ENCODE measurements at regions of chr20 and their contacts with region 1.

Region 1: DNA sequence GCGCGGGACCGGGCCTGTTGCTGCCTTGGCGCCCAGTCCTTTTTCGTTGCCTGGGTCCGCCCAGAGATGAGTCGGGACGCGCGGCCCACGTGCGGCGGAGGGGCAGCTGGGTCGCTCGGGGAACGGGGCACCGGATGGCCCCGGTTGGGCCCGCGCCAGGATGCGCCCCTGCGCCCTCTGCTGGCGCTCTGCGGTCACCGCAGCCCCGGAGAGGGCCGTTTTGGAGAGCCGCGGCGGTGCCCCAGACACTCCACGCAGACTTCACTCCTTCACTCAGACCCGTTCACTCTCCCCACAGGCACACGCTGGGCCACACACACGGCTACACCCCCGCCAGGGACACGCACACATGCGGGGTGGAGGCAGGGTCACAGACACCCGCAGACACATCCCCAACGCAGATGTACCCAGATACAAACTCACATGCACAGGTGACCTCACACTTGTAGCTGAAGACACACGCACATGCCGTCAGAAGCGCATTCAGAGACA is 38.8 kb downstream of the SRC start:
- DNase-seq: peak; percentile 85
- ATAC-seq: peak; percentile 71
- H3K4me3 ChIP-seq: peak overlapping the region in 4 of 5 experiments; percentile 49 to 65 (median 57)
- H3K4me3 Mint-ChIP-seq: peak overlapping the region; percentile 92
- H3K27ac ChIP-seq: peak overlapping the region in 1 of 2 donors; percentile 59
- H3K27ac Mint-ChIP-seq: peak overlapping the region; percentile 90
- H3K4me1 ChIP-seq: peaks cover 10 to 42% of the 10 kb centered on the region in 2 donors
- H3K4me1 Mint-ChIP-seq: peaks cover 39% of the 10 kb centered on the region
- H3K27me3 ChIP-seq: no peaks in the 10 kb centered on the region
- H3K27me3 Mint-ChIP-seq: no peaks in the 10 kb centered on the region
- CTCF ChIP-seq: peak; percentile 90

Region 2: GRCh38 chr20:37192137-37192854 is 192.4 kb before region 1 on chr20:
- CTCF ChIA-PET with region 1: interaction called, 17 read pairs
- POLR2A ChIA-PET with region 1: no interaction called
- intact Hi-C with region 1: loop called (anchors 2 kb)
- DNase-seq: peak; percentile 75
- ATAC-seq: peak; percentile 82
- H3K4me3 ChIP-seq: no peak overlapping the region
- H3K4me3 Mint-ChIP-seq: no peak overlapping the region
- H3K27ac ChIP-seq: no peak overlapping the region
- H3K27ac Mint-ChIP-seq: no peak overlapping the region
- H3K4me1 ChIP-seq: peaks cover 18 to 37% of the 10 kb centered on the region in 2 donors
- H3K4me1 Mint-ChIP-seq: peaks cover 50% of the 10 kb centered on the region
- H3K27me3 ChIP-seq: no peaks in the 10 kb centered on the region
- H3K27me3 Mint-ChIP-seq: no peaks in the 10 kb centered on the region
- CTCF ChIP-seq: peak; percentile 97

Region 3: DNA sequence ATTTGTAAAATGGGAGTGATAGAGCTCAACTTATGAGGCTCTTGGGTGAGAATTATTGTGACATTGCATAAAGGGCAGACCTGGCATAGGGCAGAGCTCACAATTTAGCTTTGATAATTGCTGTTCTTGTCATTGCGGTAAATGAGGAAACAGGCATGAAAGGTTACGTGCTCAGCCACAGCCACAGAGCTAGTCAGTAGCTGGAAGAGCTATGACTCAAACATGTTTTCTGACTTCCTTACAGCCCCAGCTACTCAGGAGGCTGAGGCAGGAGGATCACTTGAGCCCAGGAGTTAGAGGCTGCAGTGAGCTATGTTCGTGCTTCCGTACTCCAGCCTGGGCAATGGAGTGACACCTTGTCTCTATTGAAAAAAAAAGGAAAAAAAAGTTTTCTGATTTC is 119.6 kb before region 1 on chr20:
- CTCF ChIA-PET with region 1: interaction called, 67 read pairs
- POLR2A ChIA-PET with region 1: interaction called, 3 read pairs
- intact Hi-C with region 1: loop called (anchors 1 kb)
- DNase-seq: peak; percentile 54
- ATAC-seq: peak; percentile 75
- H3K4me3 ChIP-seq: no peak overlapping the region
- H3K4me3 Mint-ChIP-seq: no peak overlapping the region
- H3K27ac ChIP-seq: no peak overlapping the region
- H3K27ac Mint-ChIP-seq: no peak overlapping the region
- H3K4me1 ChIP-seq: peaks cover 10 to 17% of the 10 kb centered on the region in 2 donors
- H3K4me1 Mint-ChIP-seq: peaks cover 13% of the 10 kb centered on the region
- H3K27me3 ChIP-seq: no peaks in the 10 kb centered on the region
- H3K27me3 Mint-ChIP-seq: peaks cover 12% of the 10 kb centered on the region
- CTCF ChIP-seq: no peak

Region 4: GRCh38 chr20:37276494-37277252 is 108.1 kb before region 1 on chr20:
- CTCF ChIA-PET with region 1: interaction called, 67 read pairs
- POLR2A ChIA-PET with region 1: no interaction called
- intact Hi-C with region 1: no loop called
- DNase-seq: peak; percentile 68
- ATAC-seq: peak; percentile 61
- H3K4me3 ChIP-seq: peak overlapping the region in 1 of 5 experiments; percentile 1
- H3K4me3 Mint-ChIP-seq: peak overlapping the region; percentile 73
- H3K27ac ChIP-seq: peak overlapping the region; percentile 60 to 65
- H3K27ac Mint-ChIP-seq: peak overlapping the region; percentile 92
- H3K4me1 ChIP-seq: peaks cover 45 to 48% of the 10 kb centered on the region in 2 donors
- H3K4me1 Mint-ChIP-seq: peaks cover 37% of the 10 kb centered on the region
- H3K27me3 ChIP-seq: no peaks in the 10 kb centered on the region
- H3K27me3 Mint-ChIP-seq: no peaks in the 10 kb centered on the region
- CTCF ChIP-seq: no peak

Region 5: GRCh38 chr20:37336369-37337207 is 48.1 kb before region 1 on chr20:
- CTCF ChIA-PET with region 1: interaction called, 3 read pairs
- POLR2A ChIA-PET with region 1: no interaction called
- intact Hi-C with region 1: loop called (anchors 5 kb)
- DNase-seq: peak; percentile 81
- ATAC-seq: peak; percentile 79
- H3K4me3 ChIP-seq: peak overlapping the region in 3 of 5 experiments; percentile 27 to 44 (median 30)
- H3K4me3 Mint-ChIP-seq: peak overlapping the region; percentile 77
- H3K27ac ChIP-seq: peak overlapping the region; percentile 59 to 60
- H3K27ac Mint-ChIP-seq: peak overlapping the region; percentile 88
- H3K4me1 ChIP-seq: peaks cover 28 to 38% of the 10 kb centered on the region in 2 donors
- H3K4me1 Mint-ChIP-seq: peaks cover 32% of the 10 kb centered on the region
- H3K27me3 ChIP-seq: no peaks in the 10 kb centered on the region
- H3K27me3 Mint-ChIP-seq: no peaks in the 10 kb centered on the region
- CTCF ChIP-seq: no peak

Region 6: GRCh38 chr20:37527638-37528441 is 143.1 kb after region 1 on chr20 and contains the start of gene BLCAP:
- CTCF ChIA-PET with region 1: interaction called, 19 read pairs
- POLR2A ChIA-PET with region 1: no interaction called
- intact Hi-C with region 1: loop called (anchors 1 kb)
- DNase-seq: peak; percentile 97
- ATAC-seq: peak; percentile 85
- H3K4me3 ChIP-seq: peak within 1 kb of the TSS; percentile 82 to 99 (median 96)
- H3K4me3 Mint-ChIP-seq: peak within 1 kb of the TSS; percentile 89
- H3K27ac ChIP-seq: peak within 1 kb of the TSS; percentile 100
- H3K27ac Mint-ChIP-seq: peak within 1 kb of the TSS; percentile 100
- H3K4me1 ChIP-seq: peaks cover 36 to 41% of the 10 kb centered on the region in 2 donors
- H3K4me1 Mint-ChIP-seq: peaks cover 50% of the 10 kb centered on the region
- H3K27me3 ChIP-seq: no peaks in the 10 kb centered on the region
- H3K27me3 Mint-ChIP-seq: no peaks in the 10 kb centered on the region
- CTCF ChIP-seq: no peak
- total RNA-seq, gene BLCAP: 187 and 188 TPM in 2 replicates

Region 7: GRCh38 chr20:37990571-37991151 is 605.9 kb after region 1 on chr20:
- CTCF ChIA-PET with region 1: no interaction called
- POLR2A ChIA-PET with region 1: no interaction called
- intact Hi-C with region 1: no loop called
- DNase-seq: peak; percentile 75
- ATAC-seq: peak; percentile 88
- H3K4me3 ChIP-seq: no peak overlapping the region
- H3K4me3 Mint-ChIP-seq: peak overlapping the region; percentile 6
- H3K27ac ChIP-seq: no peak overlapping the region
- H3K27ac Mint-ChIP-seq: peak overlapping the region; percentile 51
- H3K4me1 ChIP-seq: peaks cover 13 to 18% of the 10 kb centered on the region in 2 donors
- H3K4me1 Mint-ChIP-seq: peaks cover 18% of the 10 kb centered on the region
- H3K27me3 ChIP-seq: no peaks in the 10 kb centered on the region
- H3K27me3 Mint-ChIP-seq: no peaks in the 10 kb centered on the region
- CTCF ChIP-seq: no peak

Measured in B cell (primary cell).